ENCODE measurements at regions of chr18 and their contacts with region 1.

Region 1: GRCh38 chr18:50356036-50356945 is 18.6 kb upstream of the SKA1 start:
- DNase-seq: no peak
- H3K4me3 Mint-ChIP-seq: no peak overlapping the region
- H3K27ac Mint-ChIP-seq: no peak overlapping the region
- H3K4me1 Mint-ChIP-seq: peaks cover 13% of the 10 kb centered on the region
- H3K27me3 Mint-ChIP-seq: peaks cover 29% of the 10 kb centered on the region

Region 2: DNA sequence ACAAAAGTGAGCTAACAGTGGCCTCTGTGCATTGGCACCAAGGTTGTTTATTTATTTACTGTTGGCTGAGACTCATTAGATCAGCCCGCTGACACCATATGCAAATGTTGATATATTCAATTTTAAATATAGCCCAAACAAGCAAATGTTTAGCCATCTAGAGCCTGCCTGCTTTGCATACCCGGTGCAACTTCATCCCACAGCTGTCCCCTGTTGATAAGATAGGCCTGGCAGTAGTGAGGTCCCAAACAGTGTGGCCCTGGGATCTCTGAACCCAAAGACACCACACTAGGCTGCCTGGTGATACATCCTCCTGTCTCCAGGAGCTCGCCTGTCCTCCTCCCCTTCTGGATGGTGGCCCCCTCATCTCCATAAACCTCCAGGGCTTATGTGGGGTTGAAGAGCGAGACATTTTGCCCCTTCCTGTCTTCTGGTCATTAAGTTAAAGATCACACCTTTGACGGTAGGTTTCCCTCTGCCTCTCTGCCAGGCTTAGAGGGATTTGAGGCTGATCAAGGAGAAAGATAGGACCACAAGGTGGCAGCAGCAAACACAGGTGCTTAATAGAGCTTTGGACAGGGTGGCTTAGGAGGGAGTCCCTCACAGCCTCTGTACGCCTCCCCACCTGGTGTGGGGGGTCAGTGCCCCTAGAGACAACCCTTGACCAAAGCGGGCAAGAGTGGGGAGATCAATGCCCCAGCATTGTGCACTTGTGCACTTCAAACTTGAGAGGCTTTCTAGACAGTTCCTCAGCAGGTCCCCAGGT is 137.7 kb before region 1 on chr18:
- CTCF ChIA-PET with region 1: interaction called, 111 read pairs
- DNase-seq: peak; percentile 56
- H3K4me3 Mint-ChIP-seq: no peak overlapping the region
- H3K27ac Mint-ChIP-seq: no peak overlapping the region
- H3K4me1 Mint-ChIP-seq: no peaks in the 10 kb centered on the region
- H3K27me3 Mint-ChIP-seq: peaks cover 11% of the 10 kb centered on the region

Region 3: DNA sequence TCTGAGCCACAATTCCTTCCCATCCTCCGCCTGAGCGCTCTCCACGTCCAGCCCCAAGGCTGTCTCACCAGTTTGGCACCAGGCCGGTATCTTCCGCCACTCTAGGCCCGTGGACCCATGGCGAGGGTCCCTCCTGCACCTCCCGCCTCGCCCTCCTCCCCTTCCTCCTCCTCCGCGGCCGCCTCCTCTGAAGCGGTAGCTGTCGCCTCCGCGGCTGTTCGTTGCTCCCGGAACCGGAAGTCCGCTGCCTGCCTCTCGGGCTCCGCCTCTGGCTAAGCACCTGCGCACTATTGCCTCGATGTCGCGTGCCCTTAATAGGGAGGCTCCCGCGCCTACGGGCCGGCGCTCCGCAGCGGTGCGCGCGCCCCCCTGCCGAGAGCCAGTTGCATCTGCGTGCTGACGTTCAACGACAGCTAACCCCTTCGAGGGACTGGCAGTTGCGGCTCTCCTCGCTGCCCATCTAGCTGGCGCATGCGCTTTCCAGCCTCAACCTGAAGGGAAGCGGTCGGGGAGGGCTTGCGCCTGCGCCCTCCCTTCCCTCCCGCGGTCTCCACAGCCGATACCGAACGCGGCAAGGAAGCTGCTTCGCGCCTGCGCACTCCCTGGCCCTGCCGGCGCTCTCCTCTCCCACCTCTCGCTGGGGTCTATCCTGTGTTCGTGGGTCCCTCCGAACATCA is 74.9 kb before region 1 on chr18 and contains the start of gene MBD1:
- CTCF ChIA-PET with region 1: interaction called, 21 read pairs
- DNase-seq: peak; percentile 98
- H3K4me3 Mint-ChIP-seq: peak within 1 kb of the TSS; percentile 98
- H3K27ac Mint-ChIP-seq: peak within 1 kb of the TSS; percentile 94
- H3K4me1 Mint-ChIP-seq: peaks cover 64% of the 10 kb centered on the region
- H3K27me3 Mint-ChIP-seq: no peaks in the 10 kb centered on the region

Region 4: DNA sequence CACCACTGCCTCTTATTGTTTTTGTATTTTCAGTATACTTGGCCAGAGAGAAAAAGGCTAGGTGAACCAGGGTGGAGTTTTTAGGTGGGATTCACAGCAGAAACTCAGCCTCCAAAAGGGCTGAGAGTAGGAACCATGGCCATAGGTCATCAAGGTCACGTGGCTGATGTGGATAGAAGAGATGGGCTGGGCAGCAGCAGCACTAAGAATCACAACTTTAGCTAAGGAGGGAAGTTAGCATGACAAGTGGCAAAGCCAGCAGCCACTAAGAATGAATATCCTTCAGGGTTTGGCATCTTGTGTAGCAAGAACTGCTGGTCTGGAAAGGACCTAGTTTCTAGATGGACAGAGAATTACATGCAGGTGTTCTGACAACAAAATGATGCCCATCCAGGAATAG is 24.6 kb before region 1 on chr18:
- CTCF ChIA-PET with region 1: interaction called, 11 read pairs
- DNase-seq: no peak
- H3K4me3 Mint-ChIP-seq: no peak overlapping the region
- H3K27ac Mint-ChIP-seq: no peak overlapping the region
- H3K4me1 Mint-ChIP-seq: no peaks in the 10 kb centered on the region
- H3K27me3 Mint-ChIP-seq: peaks cover 25% of the 10 kb centered on the region